ENCODE measurements at regions of chr6 and their contacts with region 1.

Region 1: DNA sequence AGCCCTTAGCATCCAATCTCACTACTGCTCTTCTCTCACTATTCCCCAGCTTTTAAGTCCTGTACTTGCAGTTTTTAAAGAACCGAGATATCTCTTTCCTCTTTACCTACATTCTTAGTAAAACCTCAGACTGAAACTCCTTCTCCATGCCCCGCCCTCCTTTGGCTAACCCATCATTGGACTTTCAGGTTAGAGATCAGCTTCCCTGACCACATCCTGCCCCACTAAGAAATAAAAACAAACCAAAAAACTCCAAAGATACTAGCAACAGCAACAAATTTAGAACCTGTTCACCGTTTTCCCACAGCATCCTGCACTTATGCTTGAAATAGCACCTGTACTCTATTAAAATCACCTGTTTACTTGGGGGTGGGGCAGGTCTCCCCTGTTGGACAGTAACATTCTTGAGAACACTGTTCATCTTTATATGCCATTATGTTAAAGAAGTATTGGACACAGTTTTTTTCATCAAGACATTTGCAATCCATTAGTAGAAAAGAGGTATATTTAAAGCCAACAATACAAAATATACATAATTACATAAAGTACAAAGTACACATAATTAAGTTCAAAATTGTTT is 16.3 kb upstream of the SMAP1 start:
- DNase-seq: no peak

Region 2: DNA sequence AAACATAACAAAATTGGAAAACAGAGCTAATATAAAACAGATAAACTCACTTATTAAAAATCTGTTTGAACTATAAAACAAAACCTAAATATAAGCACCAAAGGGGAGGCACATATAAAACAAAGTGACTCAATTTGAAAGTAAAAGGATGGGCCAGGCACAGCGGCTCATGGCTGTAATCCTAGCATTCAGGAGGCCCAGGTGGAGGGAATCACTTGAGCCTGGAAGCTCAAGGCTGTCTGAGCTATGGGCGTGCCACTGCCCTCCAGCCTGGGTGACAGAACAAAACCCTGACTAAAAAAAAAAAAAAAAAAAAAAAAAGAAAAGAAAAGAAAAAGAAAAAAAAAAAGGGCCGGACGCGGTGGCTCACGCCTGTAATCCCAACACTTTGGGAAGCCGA is 14.8 kb before region 1 on chr6:
- CTCF ChIA-PET with region 1: interaction called, 14 read pairs
- POLR2A ChIA-PET with region 1: no interaction called
- DNase-seq: no peak

Region 3: DNA sequence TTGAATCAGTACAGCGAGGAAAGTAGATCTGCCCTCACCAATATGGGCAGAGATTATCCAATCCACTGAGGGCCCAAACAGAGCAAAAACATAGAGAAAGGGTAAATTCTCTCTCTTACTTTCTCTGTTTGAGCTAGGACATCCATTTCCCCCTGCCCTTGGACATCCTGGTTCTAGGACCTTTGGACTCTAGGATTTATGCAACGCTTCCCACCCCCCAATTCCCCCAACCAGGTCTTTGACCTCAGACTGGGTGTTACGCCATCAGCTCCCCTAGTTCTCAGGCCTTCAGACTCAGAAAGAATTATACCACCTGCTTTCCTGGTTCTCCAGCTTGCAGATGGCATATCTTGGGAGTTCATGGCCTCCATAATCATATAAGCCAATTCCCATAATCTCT is 315.6 kb after region 1 on chr6:
- CTCF ChIA-PET with region 1: no interaction called
- POLR2A ChIA-PET with region 1: no interaction called
- DNase-seq: no peak

Region 4: DNA sequence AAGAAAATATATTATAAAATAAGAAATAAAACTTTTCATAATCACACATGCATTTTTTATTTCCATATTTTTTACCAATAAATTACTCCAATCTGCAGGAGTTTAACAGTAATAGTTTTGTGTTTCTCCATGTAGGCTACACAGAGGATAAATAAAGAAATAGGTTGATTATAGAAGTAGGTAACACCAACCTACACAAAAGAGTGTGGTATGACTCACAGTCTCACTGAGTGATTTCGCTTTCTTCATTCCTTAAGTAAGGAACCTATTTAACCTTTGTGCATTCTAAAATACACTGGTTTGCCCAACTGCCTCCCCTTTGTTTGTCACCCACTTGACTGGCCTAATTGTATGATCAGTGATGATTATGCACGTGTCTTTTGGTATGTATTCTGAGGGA is 990.7 kb after region 1 on chr6:
- CTCF ChIA-PET with region 1: no interaction called
- POLR2A ChIA-PET with region 1: no interaction called
- DNase-seq: no peak